PC-3 (cell line): ENCODE measurements at regions of chr4 and their contacts with region 1.

Region 1: DNA sequence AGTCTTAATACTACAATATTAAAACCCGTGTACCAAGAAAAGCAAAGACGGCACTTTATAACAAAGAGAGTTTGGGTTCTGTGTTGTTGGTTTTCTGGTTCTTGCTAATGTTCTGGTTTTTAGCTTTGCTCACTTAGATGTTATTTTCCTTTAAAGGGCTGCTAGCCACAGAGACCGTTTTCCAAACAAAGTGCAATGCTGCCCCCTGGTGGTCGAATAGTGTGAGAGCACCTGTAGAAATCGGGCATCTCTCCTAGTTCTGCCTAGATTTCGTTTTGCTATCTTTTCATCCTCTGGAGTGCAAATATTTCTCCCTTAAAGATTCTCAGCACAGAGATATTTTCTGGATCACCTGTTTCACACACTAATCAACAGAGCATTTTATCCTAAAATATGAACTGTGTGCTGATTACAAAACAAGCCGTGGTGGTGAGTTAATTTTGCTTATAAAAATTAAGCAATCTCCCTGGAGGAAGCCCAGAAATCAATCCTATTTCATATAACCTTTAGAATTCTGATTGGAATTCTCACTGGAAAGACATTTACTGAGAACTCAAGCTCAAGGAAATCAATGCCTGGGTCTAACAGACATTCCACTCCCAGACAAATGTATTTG is 334.5 kb upstream of the NOCT start:
- DNase-seq: peak; percentile 80
- ATAC-seq: peak; percentile 59
- H3K4me3 ChIP-seq: peak overlapping the region; percentile 34; the same call in 1 of the 2 replicates
- H3K27ac ChIP-seq: peak overlapping the region; percentile 90
- H3K4me1 ChIP-seq: peaks cover 9% of the 10 kb centered on the region
- H3K27me3 ChIP-seq: no peaks in the 10 kb centered on the region
- CTCF ChIP-seq: peak; percentile 86

Region 2: DNA sequence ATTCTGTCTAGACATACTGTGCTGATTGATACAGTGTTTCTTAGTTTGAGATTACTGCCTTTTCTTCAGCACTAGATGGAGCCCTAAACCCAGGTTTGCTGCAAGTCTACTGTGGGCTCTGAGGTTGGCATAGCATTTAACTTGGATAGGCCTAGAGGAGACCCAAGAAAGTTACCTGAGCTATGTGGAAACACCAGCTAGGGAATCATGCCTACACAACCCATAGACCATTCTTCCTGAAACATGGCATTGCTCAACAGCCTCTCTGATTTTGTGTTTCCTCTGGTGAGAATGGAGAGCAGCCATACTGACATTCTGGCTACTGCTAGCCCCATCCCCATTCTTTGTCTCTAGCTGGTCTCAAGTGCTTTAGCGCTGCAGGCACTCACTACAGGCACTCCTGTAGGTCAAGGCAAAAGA is 861.1 kb before region 1 on chr4:
- CTCF ChIA-PET with region 1: no interaction called
- POLR2A ChIA-PET with region 1: no interaction called
- intact Hi-C with region 1: loop called (anchors 2 kb)
- DNase-seq: peak; percentile 65
- ATAC-seq: peak; percentile 90
- H3K4me3 ChIP-seq: no peak overlapping the region
- H3K27ac ChIP-seq: no peak overlapping the region
- H3K4me1 ChIP-seq: peaks cover 6% of the 10 kb centered on the region; the same call in 1 of the 2 replicates
- H3K27me3 ChIP-seq: no peaks in the 10 kb centered on the region
- CTCF ChIP-seq: peak; percentile 81

Region 3: GRCh38 chr4:138182838-138183426 is 498.2 kb before region 1 on chr4:
- CTCF ChIA-PET with region 1: no interaction called
- POLR2A ChIA-PET with region 1: no interaction called
- intact Hi-C with region 1: loop called (anchors 5 kb)
- DNase-seq: peak; percentile 67
- ATAC-seq: peak; percentile 15; the same call in 1 of the 2 replicates
- H3K4me3 ChIP-seq: no peak overlapping the region
- H3K27ac ChIP-seq: no peak overlapping the region
- H3K4me1 ChIP-seq: no peaks in the 10 kb centered on the region
- H3K27me3 ChIP-seq: no peaks in the 10 kb centered on the region
- CTCF ChIP-seq: peak; percentile 73

Region 4: GRCh38 chr4:138540056-138540800 is 140.9 kb before region 1 on chr4:
- CTCF ChIA-PET with region 1: no interaction called
- POLR2A ChIA-PET with region 1: no interaction called
- intact Hi-C with region 1: no loop called
- DNase-seq: peak; percentile 5
- ATAC-seq: no peak
- H3K4me3 ChIP-seq: no peak overlapping the region
- H3K27ac ChIP-seq: no peak overlapping the region
- H3K4me1 ChIP-seq: no peaks in the 10 kb centered on the region
- H3K27me3 ChIP-seq: no peaks in the 10 kb centered on the region
- CTCF ChIP-seq: no peak

Region 5: DNA sequence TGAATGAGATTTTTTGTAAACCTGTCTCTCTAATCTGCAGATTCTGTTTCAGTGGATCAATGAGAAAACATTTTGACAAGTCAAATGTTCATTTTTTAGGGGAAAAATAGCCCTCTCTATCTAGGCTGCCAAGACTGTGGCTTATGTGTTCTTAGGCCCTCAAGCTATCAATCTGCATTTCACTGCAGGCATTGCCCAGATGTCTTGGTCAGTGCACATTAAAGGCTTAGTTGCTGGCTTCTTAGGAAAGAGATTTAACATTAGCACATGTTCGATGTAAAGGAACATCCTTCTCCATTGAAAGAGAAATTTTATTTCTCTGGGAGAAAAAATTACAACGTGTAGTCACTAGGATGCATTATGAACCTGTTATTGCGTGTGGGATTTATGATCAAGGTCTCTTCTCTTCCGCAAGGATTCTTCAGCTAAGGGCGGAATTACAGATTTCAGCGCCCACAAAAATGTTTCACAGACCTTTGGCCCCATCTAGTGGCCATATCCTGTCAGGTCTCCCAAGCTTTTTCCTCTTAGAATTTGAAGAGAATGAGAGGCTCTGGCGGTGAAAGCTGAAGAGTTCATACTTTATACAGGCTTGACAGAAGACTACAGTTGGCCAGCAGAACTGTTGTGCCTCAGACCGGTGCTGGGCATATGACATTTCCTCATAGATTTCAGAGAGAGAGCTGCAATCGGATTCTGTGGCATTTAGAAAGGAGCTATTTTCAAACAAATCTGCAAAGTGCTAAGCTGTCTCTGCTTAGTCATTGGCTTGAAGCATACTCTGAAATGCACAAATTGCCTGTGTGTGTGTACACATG is 189.8 kb after region 1 on chr4:
- CTCF ChIA-PET with region 1: no interaction called
- POLR2A ChIA-PET with region 1: no interaction called
- intact Hi-C with region 1: loop called (anchors 2 kb)
- DNase-seq: peak; percentile 80
- ATAC-seq: peak; percentile 67
- H3K4me3 ChIP-seq: no peak overlapping the region
- H3K27ac ChIP-seq: no peak overlapping the region
- H3K4me1 ChIP-seq: peaks cover 5% of the 10 kb centered on the region
- H3K27me3 ChIP-seq: no peaks in the 10 kb centered on the region
- CTCF ChIP-seq: peak; percentile 84

Region 6: DNA sequence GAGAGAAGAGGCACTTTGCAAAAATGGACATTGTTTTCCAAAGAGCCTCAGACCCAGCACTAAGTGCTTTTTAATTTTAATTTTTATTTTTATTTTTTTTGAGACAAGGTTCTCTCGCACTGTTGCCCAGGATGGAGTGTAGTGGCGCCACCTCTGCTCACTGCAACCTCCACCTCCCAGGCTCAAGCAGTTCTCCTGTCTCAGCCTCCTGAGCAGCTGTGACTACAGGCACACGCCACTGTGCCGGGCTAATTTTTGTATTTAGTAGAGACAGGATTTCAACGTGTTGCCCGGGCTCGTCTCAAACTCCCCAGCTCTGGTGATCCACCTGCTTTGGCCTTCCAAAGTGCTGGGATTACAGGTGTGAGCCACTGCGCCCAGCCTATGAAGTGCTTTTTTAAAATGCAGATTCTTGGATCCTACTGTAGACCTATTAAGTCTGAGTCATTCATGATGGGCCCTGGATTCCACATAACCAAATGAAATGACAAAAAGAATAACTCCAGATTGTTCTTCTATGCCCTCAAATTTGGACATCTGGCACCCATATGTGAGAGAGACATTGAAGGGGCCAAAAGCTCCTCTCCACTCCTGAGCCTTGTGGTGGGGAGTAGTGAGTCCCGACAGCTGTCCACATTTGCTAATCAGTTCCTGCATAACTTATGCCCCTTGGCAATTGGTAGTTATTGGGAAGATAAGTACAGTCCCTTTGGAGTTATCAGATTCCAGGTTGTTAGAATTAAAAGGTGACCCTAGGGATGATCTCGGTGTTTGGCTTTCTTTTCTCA is 338.1 kb after region 1 on chr4:
- CTCF ChIA-PET with region 1: no interaction called
- POLR2A ChIA-PET with region 1: no interaction called
- intact Hi-C with region 1: no loop called
- DNase-seq: no peak
- ATAC-seq: no peak
- H3K4me3 ChIP-seq: 0 out of 2 replicates have a peak overlapping the region, but pooled peaks have one; percentile 64
- H3K27ac ChIP-seq: no peak overlapping the region
- H3K4me1 ChIP-seq: peaks cover 34% of the 10 kb centered on the region
- H3K27me3 ChIP-seq: no peaks in the 10 kb centered on the region
- CTCF ChIP-seq: no peak